ENCODE measurements at regions of chr10 and their contacts with region 1.

Region 1: GRCh38 chr10:123994417-123995081 is 98.8 kb downstream of the CHST15 start:
- DNase-seq: peak; percentile 97
- ATAC-seq: peak; percentile 68
- H3K4me3 Mint-ChIP-seq: peak overlapping the region; percentile 70
- H3K27ac Mint-ChIP-seq: no peak overlapping the region
- H3K4me1 Mint-ChIP-seq: peaks cover 20% of the 10 kb centered on the region
- H3K27me3 Mint-ChIP-seq: peaks cover 47% of the 10 kb centered on the region
- CTCF ChIP-seq: peak; percentile 100

Region 2: GRCh38 chr10:123942114-123942807 is 52.3 kb before region 1 on chr10:
- CTCF ChIA-PET with region 1: no interaction called
- POLR2A ChIA-PET with region 1: no interaction called
- DNase-seq: no peak
- ATAC-seq: no peak
- H3K4me3 Mint-ChIP-seq: no peak overlapping the region
- H3K27ac Mint-ChIP-seq: no peak overlapping the region
- H3K4me1 Mint-ChIP-seq: peaks cover 14% of the 10 kb centered on the region
- H3K27me3 Mint-ChIP-seq: no peaks in the 10 kb centered on the region
- CTCF ChIP-seq: no peak

Region 3: GRCh38 chr10:123974406-123974805 is 20.1 kb before region 1 on chr10:
- CTCF ChIA-PET with region 1: interaction called, 12 read pairs
- POLR2A ChIA-PET with region 1: no interaction called
- DNase-seq: no peak
- ATAC-seq: no peak
- H3K4me3 Mint-ChIP-seq: peak overlapping the region; percentile 12; the same call in 1 of the 2 replicates
- H3K27ac Mint-ChIP-seq: no peak overlapping the region
- H3K4me1 Mint-ChIP-seq: peaks cover 37% of the 10 kb centered on the region
- H3K27me3 Mint-ChIP-seq: peaks cover 41% of the 10 kb centered on the region
- CTCF ChIP-seq: no peak

Region 4: DNA sequence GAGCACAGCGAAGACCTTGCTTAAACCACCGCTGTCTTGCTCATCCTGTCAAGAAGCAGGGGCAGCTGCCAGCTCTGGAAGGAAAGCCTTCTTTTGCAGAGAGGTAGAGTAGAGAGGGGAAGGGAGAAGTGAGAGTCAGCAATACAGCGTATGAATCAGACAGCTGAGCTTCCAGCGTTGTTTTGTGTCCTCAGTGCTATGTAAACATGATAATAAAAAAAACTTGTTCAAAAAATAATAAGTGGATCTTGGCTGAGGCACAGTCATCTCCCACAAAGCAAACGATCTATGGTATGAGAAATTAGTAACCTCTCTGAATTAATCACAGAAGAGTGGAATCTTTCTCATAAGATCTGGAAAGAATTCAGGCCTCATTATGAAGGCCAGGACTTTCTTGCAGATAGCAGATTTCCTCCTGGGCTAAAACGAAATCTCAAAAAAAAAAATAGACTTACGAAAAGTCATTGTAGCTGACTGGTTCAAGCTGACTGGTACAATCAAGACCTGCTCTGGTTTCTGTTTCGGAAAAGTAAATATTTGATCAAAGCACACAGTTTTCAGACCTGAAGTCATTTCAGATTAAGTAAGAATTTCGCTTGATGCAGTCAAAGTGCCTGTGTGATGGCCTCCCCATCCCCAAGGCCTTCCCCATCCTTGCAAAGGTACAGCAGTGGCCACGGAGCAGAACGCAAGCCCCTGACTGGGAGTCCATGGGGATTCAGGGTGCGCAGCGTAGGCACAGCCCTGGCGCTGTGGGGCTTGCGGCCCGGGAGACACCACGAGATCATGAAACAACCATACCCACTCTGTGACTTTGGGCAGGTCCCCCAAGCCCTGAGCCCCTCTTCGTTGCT is 69.4 kb after region 1 on chr10:
- CTCF ChIA-PET with region 1: interaction called, 18 read pairs
- POLR2A ChIA-PET with region 1: no interaction called
- DNase-seq: no peak
- ATAC-seq: no peak
- H3K4me3 Mint-ChIP-seq: no peak overlapping the region
- H3K27ac Mint-ChIP-seq: no peak overlapping the region; the same call in 1 of the 2 replicates
- H3K4me1 Mint-ChIP-seq: peaks cover 42% of the 10 kb centered on the region
- H3K27me3 Mint-ChIP-seq: no peaks in the 10 kb centered on the region
- CTCF ChIP-seq: no peak

Region 5: DNA sequence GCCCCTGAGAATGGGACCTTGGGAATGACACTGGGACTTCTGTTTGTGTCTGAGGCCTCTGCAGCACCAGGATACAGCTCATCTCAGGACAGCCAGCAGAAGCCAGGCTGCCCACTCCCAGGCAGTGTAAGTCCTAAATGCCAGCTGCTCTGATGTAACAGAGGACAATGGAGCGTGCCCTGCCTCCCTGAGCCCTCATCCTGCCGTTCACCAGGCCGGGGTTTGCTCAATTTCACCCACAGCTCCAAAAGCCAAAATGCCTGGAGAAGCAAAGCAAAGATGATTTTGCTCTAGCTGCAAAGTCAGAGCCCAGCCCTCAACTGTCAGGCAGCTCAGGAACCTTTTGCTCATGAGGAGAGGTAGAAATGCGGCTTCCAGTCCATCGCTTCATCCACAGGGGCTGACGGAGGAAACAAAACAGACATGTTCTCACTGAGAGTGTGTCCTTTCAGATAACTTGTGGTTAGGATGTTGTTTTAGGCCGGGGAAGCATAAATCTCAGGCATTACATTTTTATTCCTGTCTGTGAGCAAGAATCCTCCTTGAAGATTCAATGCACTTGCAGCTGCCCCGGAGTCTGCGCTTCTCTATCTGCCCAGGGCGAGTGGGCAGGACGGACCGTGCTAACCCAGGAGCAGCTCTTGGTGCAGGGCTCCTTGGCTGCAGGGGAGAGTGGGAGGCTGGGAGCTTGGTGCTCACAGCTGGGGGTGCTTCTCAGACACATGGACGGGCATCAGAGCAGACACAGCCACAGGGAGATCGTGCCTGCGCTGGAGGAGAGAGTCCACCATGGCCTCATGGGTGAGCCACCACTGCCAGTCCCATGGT is 182.0 kb after region 1 on chr10:
- CTCF ChIA-PET with region 1: interaction called, 11 read pairs
- POLR2A ChIA-PET with region 1: no interaction called
- DNase-seq: no peak
- ATAC-seq: no peak
- H3K4me3 Mint-ChIP-seq: no peak overlapping the region
- H3K27ac Mint-ChIP-seq: no peak overlapping the region
- H3K4me1 Mint-ChIP-seq: peaks cover 5% of the 10 kb centered on the region
- H3K27me3 Mint-ChIP-seq: peaks cover 7% of the 10 kb centered on the region
- CTCF ChIP-seq: no peak

Region 6: GRCh38 chr10:124259139-124259825 is 264.7 kb after region 1 on chr10:
- CTCF ChIA-PET with region 1: interaction called, 15 read pairs
- POLR2A ChIA-PET with region 1: no interaction called
- DNase-seq: peak; percentile 51
- ATAC-seq: peak; percentile 71
- H3K4me3 Mint-ChIP-seq: no peak overlapping the region
- H3K27ac Mint-ChIP-seq: no peak overlapping the region
- H3K4me1 Mint-ChIP-seq: no peaks in the 10 kb centered on the region
- H3K27me3 Mint-ChIP-seq: peaks cover 5% of the 10 kb centered on the region; the same call in 1 of the 2 replicates
- CTCF ChIP-seq: no peak

Region 7: DNA sequence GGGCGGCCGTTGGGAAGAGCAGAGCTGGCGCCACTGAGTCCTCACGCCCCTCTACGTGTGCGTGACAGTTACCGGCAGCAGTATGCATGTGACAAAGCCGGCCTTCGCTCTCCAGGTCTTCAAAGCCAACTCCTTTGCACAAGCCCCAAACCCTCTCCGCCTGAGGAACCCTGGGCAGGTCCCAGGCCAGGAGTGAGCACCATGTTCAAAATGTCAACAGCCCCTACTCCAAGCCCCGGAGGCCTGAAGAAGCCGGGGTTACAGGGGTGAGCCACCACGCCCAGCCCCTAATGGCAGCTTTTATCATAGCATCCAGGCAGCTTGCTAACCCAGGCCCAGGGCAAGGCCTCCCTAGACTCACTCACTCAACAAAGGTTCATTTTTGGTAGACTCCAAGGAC is 353.4 kb after region 1 on chr10:
- CTCF ChIA-PET with region 1: interaction called, 30 read pairs
- POLR2A ChIA-PET with region 1: no interaction called
- DNase-seq: peak; percentile 46
- ATAC-seq: peak; percentile 91
- H3K4me3 Mint-ChIP-seq: no peak overlapping the region
- H3K27ac Mint-ChIP-seq: no peak overlapping the region
- H3K4me1 Mint-ChIP-seq: 0 out of 2 replicates have a peak, but pooled peaks cover 2% of the 10 kb centered on the region
- H3K27me3 Mint-ChIP-seq: no peaks in the 10 kb centered on the region; the same call in 1 of the 2 replicates
- CTCF ChIP-seq: 0 out of 2 replicates have a peak, but pooled peaks have one; percentile 12